ENCODE measurements at regions of chr19 and their contacts with region 1.

Region 1: GRCh38 chr19:944171-944567 is 18.3 kb downstream of the ARID3A start:
- DNase-seq: no peak
- H3K27ac ChIP-seq: no peak overlapping the region
- CTCF ChIP-seq: no peak

Region 2: DNA sequence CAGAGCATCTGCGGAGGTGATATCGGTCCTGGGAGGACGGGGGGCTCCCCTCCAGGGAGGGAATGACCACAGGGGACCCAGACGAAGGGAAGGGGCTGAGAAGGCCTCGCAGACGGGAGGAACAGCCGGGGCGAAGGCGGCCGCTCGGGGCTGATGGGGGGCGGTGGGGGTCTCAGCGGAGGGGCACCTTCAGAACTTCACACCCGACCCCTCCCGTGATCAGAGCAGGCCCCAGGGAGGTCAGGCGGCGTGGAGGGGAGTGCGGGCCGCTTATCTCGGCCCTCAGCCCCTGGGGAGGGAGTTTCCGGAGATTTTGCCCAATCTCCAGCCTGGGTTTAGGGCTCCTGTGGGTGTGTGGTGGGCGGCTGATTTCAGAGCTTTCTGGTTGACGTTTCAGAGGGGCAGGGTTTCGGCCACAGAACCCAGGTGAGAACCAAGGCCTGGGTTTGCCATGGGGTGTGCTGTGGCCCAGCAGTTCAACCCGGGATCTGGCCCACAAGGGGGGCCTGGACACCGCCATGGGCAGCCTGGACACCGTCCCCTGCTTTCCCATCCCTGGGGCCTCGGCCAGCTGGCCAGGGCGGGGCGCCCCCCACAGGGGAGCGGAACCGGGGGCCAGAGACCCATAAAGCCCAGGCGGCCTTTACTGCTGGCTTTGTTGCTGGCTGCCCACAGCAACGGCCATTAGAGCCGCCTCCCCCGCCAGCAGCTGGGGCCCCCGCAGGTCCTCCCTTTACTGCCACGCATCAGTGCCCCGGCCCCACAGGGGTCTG is 10.7 kb after region 1 on chr19:
- CTCF ChIA-PET with region 1: no interaction called
- POLR2A ChIA-PET with region 1: no interaction called
- DNase-seq: no peak
- H3K27ac ChIP-seq: no peak overlapping the region
- CTCF ChIP-seq: no peak

Region 3: DNA sequence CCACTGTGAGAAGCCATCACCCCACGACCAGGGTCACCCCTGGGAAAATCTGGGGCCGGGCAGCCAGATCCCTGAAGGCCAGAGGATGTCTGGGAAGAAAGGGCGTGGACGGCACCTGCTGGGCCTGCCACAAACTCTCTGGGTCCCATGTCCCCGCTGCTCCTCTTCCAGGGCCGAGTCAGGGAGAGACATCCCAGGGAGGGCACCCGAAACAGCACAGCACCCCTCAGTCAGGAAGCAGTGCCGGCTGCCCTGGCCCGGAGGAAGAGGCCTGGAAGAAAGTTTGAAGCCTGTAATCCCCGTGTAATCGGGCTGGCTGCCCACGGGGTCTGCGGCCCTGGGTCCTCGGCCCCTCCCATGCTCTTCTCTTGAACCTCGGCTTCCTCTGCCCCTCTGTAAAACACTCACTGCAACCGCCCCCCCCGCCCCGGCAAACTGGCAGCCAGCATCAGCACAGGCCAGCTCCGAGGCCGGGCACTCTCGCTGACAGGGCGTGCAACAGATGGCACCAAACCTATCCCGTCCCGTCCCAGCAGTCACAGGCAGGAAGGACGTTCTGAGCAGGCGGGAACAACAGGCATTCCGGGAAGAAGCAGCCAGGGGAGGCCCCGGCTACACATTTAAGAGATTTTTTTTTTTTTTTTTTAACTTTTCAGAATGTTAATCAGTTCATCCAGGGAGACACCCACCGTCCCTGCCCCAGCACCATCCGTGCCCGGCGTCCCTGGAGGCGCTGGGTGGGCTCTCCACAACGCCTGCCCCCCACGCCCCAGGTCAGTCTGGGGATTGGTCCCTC is 228.4 kb after region 1 on chr19:
- CTCF ChIA-PET with region 1: no interaction called
- POLR2A ChIA-PET with region 1: interaction called, 17 read pairs
- DNase-seq: no peak
- H3K27ac ChIP-seq: peak overlapping the region; percentile 100
- CTCF ChIP-seq: no peak

Measured in RWPE1 (cell line).